ENCODE measurements at regions of chr10 and their contacts with region 1.

Region 1: DNA sequence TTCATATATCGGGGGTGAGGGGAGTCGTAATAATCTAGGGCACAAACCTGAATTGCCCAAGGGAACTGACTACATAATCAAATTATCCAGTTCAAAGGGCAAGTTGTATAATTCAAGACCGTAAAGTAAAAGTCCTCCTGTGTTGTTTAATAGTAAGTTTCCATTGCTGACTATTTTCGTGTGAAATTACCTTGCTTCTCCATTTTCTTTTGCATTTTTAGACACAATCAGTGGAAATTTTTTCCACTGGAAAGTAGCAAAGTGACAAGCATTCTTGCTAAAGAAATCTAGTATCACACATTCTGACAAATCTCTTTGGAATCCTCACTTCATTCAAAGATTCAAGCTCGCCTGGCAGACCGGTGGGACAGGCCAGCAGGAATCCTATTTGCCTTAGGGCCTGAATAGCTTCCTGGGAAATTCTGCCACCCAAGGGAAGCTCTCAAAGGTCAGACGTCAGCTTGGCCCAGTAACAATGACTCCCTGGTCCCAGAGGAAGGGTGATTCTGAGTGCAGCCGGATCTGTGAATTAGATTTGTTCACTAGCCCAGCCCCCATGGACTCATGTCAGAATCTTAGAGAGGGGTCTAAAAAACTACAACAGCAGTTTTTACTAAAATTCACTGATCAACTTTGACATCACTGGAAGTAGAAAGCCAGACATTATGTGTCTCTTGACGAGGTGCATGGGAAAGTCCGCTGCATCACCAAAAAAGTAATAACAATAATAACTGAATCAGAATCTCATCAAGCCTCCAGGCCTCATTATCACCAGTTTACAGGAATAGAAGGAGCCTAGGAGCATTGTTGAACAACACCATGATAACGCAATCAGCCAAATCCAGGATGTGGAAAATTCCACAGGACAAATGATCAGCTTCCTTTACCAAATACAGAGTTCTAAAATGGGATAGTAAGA is 161.0 kb downstream of the SKIDA1 start:
- DNase-seq: peak; percentile 11
- H3K4me3 ChIP-seq: no peak overlapping the region
- H3K27ac ChIP-seq: peak overlapping the region; percentile 73
- H3K27me3 ChIP-seq: no peaks in the 10 kb centered on the region
- CTCF ChIP-seq: no peak

Region 2: GRCh38 chr10:21336476-21337170 is 27.8 kb before region 1 on chr10:
- CTCF ChIA-PET with region 1: no interaction called
- POLR2A ChIA-PET with region 1: interaction called, 15 read pairs
- DNase-seq: peak; percentile 91
- H3K4me3 ChIP-seq: 0 out of 2 replicates have a peak overlapping the region, but pooled peaks have one; percentile 13
- H3K27ac ChIP-seq: peak overlapping the region; percentile 84
- H3K27me3 ChIP-seq: no peaks in the 10 kb centered on the region
- CTCF ChIP-seq: no peak